CD8-positive, alpha-beta memory T cell (primary cell): ENCODE measurements at regions of chr14 and their contacts with region 1.

Region 1: GRCh38 chr14:55107766-55108554 is 21.1 kb upstream of the LGALS3 start:
- DNase-seq: peak in 2 of 5 donors; percentile 19 to 60
- H3K4me3 ChIP-seq: no peak overlapping the region
- H3K4me3 Mint-ChIP-seq: peak overlapping the region in 5 of 7 donors; percentile 24 to 54 (median 44)
- H3K27ac ChIP-seq: peak overlapping the region; percentile 38
- H3K27ac Mint-ChIP-seq: peak overlapping the region; percentile 66 to 84 (median 80)
- H3K4me1 ChIP-seq: peaks cover 18% of the 10 kb centered on the region
- H3K4me1 Mint-ChIP-seq: peaks cover 32 to 40% (median 39%) of the 10 kb centered on the region in 3 donors
- H3K27me3 ChIP-seq: no peaks in the 10 kb centered on the region
- H3K27me3 Mint-ChIP-seq: no peaks in the 10 kb centered on the region

Region 2: GRCh38 chr14:55071870-55072640 is 35.9 kb before region 1 on chr14:
- CTCF ChIA-PET with region 1: no interaction called
- POLR2A ChIA-PET with region 1: interaction called, 14 read pairs
- DNase-seq: peak in 2 of 5 donors; percentile 5 to 38
- H3K4me3 ChIP-seq: no peak overlapping the region
- H3K4me3 Mint-ChIP-seq: peak overlapping the region in 6 of 7 donors; percentile 20 to 75 (median 49)
- H3K27ac ChIP-seq: no peak overlapping the region
- H3K27ac Mint-ChIP-seq: peak overlapping the region; percentile 75 to 95 (median 86)
- H3K4me1 ChIP-seq: peaks cover 13% of the 10 kb centered on the region
- H3K4me1 Mint-ChIP-seq: peaks cover 28 to 50% (median 44%) of the 10 kb centered on the region in 3 donors
- H3K27me3 ChIP-seq: no peaks in the 10 kb centered on the region
- H3K27me3 Mint-ChIP-seq: peaks cover 0 to 3% of the 10 kb centered on the region in 2 donors